IMR-90 (cell line): ENCODE measurements at regions of chr13 and their contacts with region 1.

Region 1: GRCh38 chr13:60448907-60449510 is 52.0 kb downstream of the TDRD3 start:
- DNase-seq: peak; percentile 68
- ATAC-seq: peak; percentile 85
- H3K4me3 ChIP-seq: no peak overlapping the region
- H3K27ac ChIP-seq: no peak overlapping the region
- H3K4me1 ChIP-seq: no peaks in the 10 kb centered on the region
- H3K27me3 ChIP-seq: no peaks in the 10 kb centered on the region
- CTCF ChIP-seq: peak; percentile 83
- POLR2A ChIP-seq: no peak
- RAD21 ChIP-seq: peak; percentile 67

Region 2: GRCh38 chr13:60226507-60226906 is 222.5 kb before region 1 on chr13:
- CTCF ChIA-PET with region 1: no interaction called
- POLR2A ChIA-PET with region 1: no interaction called
- dilution Hi-C with region 1: no loop called
- in situ Hi-C with region 1: no loop called
- intact Hi-C with region 1: no loop called
- DNase-seq: peak; percentile 47
- ATAC-seq: peak; percentile 72
- H3K4me3 ChIP-seq: no peak overlapping the region
- H3K27ac ChIP-seq: no peak overlapping the region
- H3K4me1 ChIP-seq: no peaks in the 10 kb centered on the region
- H3K27me3 ChIP-seq: peaks cover 8% of the 10 kb centered on the region
- CTCF ChIP-seq: peak; percentile 57
- POLR2A ChIP-seq: no peak
- RAD21 ChIP-seq: peak; percentile 68

Region 3: DNA sequence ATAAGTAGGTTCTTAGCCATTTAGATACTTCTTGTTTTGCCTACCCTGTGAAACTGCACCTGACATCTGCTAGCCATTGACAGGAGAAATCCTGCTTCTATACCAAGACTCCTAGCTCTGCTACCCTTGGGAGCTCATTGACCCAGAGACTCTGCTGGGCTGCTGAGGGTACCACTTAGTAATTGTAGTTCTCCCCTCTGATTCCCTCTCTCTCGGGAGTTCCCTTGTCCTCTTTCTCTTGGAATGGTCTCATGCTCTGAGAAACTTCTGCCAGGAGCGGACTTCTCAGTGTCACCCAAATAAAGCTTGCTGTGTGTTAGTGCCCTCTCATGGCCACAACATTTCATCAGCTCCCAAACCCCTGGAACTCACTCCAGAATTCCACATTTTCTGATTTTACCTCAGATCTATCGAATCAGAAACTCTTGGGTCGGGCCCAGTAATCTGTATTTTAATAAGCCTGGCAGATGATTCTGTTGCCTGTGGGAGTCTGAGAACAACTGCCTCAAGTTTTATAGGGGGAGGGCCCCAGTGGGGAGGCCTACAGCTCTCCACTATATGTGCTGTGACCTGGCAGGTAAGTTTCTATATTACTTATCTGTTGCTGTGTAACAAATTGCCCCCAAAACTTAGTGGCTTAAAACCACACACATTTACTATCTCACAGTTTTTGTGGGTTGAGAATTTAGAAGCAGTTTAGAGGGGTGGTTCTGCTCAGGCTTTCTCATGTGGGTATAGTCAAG is 169.2 kb after region 1 on chr13:
- CTCF ChIA-PET with region 1: interaction called, 6 read pairs
- POLR2A ChIA-PET with region 1: no interaction called
- dilution Hi-C with region 1: no loop called
- in situ Hi-C with region 1: no loop called
- intact Hi-C with region 1: loop called (anchors 1 kb)
- DNase-seq: peak; percentile 36
- ATAC-seq: peak; percentile 57
- H3K4me3 ChIP-seq: no peak overlapping the region
- H3K27ac ChIP-seq: no peak overlapping the region
- H3K4me1 ChIP-seq: no peaks in the 10 kb centered on the region
- H3K27me3 ChIP-seq: peaks cover 3% of the 10 kb centered on the region; the same call in 1 of the 2 replicates
- CTCF ChIP-seq: peak; percentile 47
- POLR2A ChIP-seq: no peak
- RAD21 ChIP-seq: peak; percentile 61

Region 4: DNA sequence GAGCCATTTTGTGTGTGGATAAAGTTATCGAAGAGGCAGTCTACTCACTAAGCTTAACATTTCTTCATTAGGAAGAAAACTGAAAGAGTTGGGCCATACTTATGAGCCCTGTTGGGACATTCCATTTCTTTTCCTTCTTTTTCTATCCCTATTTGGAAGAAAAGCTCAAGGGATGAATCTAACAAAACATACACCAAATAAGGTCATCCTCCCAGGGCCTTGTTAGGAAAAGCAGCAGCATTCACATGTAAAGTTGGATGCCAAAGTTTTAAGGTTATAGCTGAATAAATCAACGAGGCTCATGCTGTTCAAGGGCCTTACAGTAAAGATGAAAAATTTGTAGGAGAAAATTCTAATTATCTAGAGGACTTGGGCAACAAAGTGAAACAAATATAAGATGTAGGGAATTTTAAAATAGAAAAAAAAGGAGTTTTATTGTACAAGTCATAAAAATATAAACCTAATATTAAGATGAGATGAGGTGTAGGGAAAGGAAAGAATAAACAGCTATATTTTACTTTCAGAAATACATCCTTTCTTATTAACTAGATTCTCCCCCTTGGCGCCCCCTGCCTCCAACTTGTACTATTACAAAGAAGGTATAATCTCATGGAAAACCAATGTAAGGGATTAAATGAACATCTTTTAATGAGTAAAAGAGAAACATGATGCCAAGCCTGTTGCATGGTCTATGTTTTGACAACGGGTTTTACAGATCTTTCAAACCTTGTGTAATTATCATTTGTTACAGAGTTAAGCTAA is 806.2 kb after region 1 on chr13:
- CTCF ChIA-PET with region 1: no interaction called
- POLR2A ChIA-PET with region 1: no interaction called
- dilution Hi-C with region 1: no loop called
- in situ Hi-C with region 1: loop called (anchors 25 kb)
- intact Hi-C with region 1: no loop called
- DNase-seq: no peak
- ATAC-seq: no peak
- H3K4me3 ChIP-seq: no peak overlapping the region
- H3K27ac ChIP-seq: no peak overlapping the region
- H3K4me1 ChIP-seq: no peaks in the 10 kb centered on the region
- H3K27me3 ChIP-seq: no peaks in the 10 kb centered on the region
- CTCF ChIP-seq: peak; percentile 10; the same call in 1 of the 2 replicates
- POLR2A ChIP-seq: no peak
- RAD21 ChIP-seq: no peak

Region 5: DNA sequence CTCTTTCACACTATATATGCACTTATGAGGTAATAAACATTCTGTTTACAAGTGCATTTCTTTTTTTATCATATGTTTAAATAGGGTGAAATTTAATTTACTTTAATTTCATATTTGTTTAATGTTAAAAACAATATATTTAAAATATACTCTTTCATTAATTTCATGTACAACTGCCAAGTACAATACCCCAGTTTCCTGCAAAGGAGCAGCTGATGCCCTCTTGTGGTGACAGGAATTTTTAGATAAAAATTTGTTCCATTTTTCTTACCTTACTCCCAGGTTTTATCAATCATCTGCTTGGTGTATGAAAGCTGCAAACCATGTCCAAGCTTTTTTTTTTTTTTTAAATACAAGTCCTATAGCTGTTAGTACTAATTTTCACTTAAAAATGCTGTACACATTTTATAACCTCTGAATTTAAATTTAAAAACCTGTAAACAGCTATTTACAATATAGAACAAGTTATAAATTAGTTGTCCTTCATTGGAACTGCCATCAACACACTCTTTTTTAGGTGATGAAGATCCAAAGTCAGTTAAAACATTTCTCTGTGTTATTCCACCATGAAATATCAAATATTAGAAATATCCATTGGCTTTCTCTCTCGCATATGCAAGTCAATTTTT is 961.8 kb after region 1 on chr13:
- CTCF ChIA-PET with region 1: no interaction called
- POLR2A ChIA-PET with region 1: no interaction called
- dilution Hi-C with region 1: no loop called
- in situ Hi-C with region 1: loop called (anchors 10 kb)
- intact Hi-C with region 1: loop called (anchors 1 kb)
- DNase-seq: peak; percentile 8
- ATAC-seq: no peak
- H3K4me3 ChIP-seq: no peak overlapping the region
- H3K27ac ChIP-seq: no peak overlapping the region
- H3K4me1 ChIP-seq: no peaks in the 10 kb centered on the region
- H3K27me3 ChIP-seq: peaks cover 6% of the 10 kb centered on the region; the same call in 1 of the 2 replicates
- CTCF ChIP-seq: peak; percentile 50
- POLR2A ChIP-seq: no peak
- RAD21 ChIP-seq: peak; percentile 31; the same call in 1 of the 2 replicates

Region 6: GRCh38 chr13:61954092-61954491 is 1505.1 kb after region 1 on chr13:
- CTCF ChIA-PET with region 1: no interaction called
- POLR2A ChIA-PET with region 1: no interaction called
- dilution Hi-C with region 1: no loop called
- in situ Hi-C with region 1: no loop called
- intact Hi-C with region 1: loop called (anchors 5 kb)
- DNase-seq: peak; percentile 0
- ATAC-seq: no peak
- H3K4me3 ChIP-seq: no peak overlapping the region
- H3K27ac ChIP-seq: no peak overlapping the region
- H3K4me1 ChIP-seq: no peaks in the 10 kb centered on the region
- H3K27me3 ChIP-seq: no peaks in the 10 kb centered on the region
- CTCF ChIP-seq: no peak; the same call in 1 of the 2 replicates
- POLR2A ChIP-seq: no peak
- RAD21 ChIP-seq: no peak